ENCODE measurements at regions of chr19 and their contacts with region 1.

Region 1: GRCh38 chr19:48321622-48322591 is 3.4 kb upstream of the EMP3 start:
- DNase-seq: peak; percentile 99
- H3K4me3 ChIP-seq: peak overlapping the region; percentile 44
- H3K27ac ChIP-seq: peak overlapping the region; percentile 95
- H3K4me1 ChIP-seq: peaks cover 7% of the 10 kb centered on the region
- H3K27me3 ChIP-seq: no peaks in the 10 kb centered on the region
- CTCF ChIP-seq: no peak

Region 2: DNA sequence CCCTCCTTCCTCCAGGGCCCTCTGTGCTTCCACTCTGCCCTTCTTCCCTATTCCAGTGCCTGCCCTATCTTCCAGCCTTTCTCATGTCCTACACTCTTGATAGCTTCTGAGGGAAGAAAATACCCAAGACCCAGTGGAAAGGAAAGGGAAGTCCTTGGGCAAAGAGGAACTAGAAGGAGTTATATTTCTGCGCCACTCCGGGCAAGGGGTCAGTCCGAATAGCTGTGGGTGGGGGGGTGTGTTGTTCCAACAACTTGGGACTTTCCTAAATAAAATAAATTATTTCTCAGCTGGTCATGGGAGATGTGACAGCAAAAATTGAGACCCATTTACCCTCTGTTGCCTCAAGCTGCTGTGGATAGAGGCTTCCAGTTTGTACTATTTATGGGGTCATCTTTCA is 301.2 kb before region 1 on chr19:
- intact Hi-C with region 1: no loop called
- DNase-seq: no peak
- H3K4me3 ChIP-seq: no peak overlapping the region
- H3K27ac ChIP-seq: no peak overlapping the region
- H3K4me1 ChIP-seq: no peaks in the 10 kb centered on the region
- H3K27me3 ChIP-seq: peaks cover 4% of the 10 kb centered on the region
- CTCF ChIP-seq: no peak

Region 3: DNA sequence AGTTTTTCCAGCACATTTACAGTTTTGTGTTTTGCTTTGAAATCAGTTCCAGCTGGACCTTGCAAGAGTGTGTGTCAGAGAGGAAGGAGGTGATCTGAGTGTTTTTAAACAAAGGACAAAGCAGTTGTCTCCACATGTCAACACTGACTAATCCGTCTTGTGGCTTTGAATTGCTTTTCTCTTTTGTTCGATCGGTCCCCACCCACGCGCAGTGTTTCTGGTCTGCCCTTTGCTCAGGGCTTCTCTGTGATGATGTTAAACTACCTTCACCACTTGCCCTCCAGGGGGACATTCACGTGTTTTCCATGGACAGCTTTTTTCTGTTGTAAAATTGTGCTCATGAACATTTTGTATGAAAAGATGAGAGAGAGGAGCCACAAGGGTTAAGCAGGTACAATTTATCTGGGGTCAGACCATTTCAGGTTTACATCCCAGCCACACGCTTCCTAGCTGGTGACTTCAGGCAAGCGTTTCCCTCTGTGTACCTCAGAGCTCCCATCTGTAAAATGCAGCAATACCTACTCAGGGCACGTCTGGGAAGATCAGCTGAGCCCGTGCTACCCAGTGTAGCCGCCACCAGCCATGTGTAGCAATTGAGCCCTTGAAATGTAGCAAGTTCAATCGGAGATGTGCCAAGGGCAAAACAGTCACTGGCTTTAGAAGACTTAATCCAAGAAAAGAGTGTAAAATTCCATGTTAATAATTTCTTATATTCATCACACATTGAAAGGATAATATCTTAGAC is 197.8 kb before region 1 on chr19:
- intact Hi-C with region 1: no loop called
- DNase-seq: no peak
- H3K4me3 ChIP-seq: no peak overlapping the region
- H3K27ac ChIP-seq: no peak overlapping the region
- H3K4me1 ChIP-seq: no peaks in the 10 kb centered on the region
- H3K27me3 ChIP-seq: no peaks in the 10 kb centered on the region
- CTCF ChIP-seq: no peak

Region 4: GRCh38 chr19:48258350-48258749 is 63.6 kb before region 1 on chr19:
- intact Hi-C with region 1: no loop called
- DNase-seq: no peak
- H3K4me3 ChIP-seq: no peak overlapping the region
- H3K27ac ChIP-seq: peak overlapping the region; percentile 57
- H3K4me1 ChIP-seq: peaks cover 6% of the 10 kb centered on the region
- H3K27me3 ChIP-seq: no peaks in the 10 kb centered on the region
- CTCF ChIP-seq: no peak

Region 5: GRCh38 chr19:48379058-48379457 is 57.2 kb after region 1 on chr19:
- intact Hi-C with region 1: no loop called
- DNase-seq: peak; percentile 26
- H3K4me3 ChIP-seq: no peak overlapping the region
- H3K27ac ChIP-seq: no peak overlapping the region
- H3K4me1 ChIP-seq: no peaks in the 10 kb centered on the region
- H3K27me3 ChIP-seq: no peaks in the 10 kb centered on the region
- CTCF ChIP-seq: no peak

Region 6: DNA sequence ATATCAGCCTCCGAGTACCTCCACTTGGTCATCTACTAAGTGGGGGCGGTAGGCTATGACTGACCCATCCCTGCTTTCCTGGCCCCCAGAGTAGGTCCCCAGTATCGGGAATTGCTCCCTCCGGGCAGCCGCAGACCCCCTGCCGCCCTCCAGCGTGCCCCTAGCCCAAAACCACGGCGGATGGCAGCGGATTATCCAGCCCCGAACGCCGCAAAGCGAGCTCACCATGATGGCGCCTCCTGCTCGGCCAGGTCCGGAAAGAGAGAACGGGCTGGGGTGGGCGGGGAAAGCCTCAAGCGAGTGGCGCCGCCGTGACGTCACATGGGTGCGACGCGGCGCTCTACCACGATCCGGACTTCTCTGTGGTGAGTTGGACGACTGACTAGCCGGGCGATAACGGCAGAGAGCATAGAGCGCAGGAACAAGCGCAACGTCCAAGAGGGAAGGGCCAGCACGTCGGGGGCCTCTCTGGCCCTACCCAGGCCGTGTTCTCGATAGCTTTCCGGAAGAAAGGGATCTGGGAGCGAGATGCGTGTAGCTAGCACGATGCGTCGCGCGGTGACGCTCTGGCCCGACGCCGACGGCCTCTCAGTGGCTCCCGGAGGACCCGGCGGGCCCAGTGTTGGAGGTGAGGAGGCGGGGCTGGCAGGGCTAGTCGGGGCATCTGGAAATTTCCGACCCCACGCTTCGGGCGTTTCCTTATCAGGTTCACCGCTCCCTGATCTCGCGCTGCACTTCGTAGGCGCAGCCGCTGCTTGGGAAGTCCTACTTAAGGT is 297.2 kb after region 1 on chr19 and contains the starts of genes RPL18 and SPHK2:
- intact Hi-C with region 1: loop called (anchors 10 kb)
- DNase-seq: peak; percentile 97
- H3K4me3 ChIP-seq: peak within 1 kb of the TSS; percentile 88
- H3K27ac ChIP-seq: peak within 1 kb of the TSS; percentile 93
- H3K4me1 ChIP-seq: peaks cover 17% of the 10 kb centered on the region
- H3K27me3 ChIP-seq: no peaks in the 10 kb centered on the region
- CTCF ChIP-seq: no peak
- total RNA-seq, gene RPL18: 1,499 to 1,736 TPM
- total RNA-seq, gene SPHK2: 36.2 to 48.4 TPM

Measured in colonic mucosa (tissue), 4 donors.